Tibial artery (tissue), 4 donors: ENCODE measurements at regions of chr7 and their contacts with region 1.

Region 1: GRCh38 chr7:117085769-117086463 is 132.6 kb downstream of the ST7 start:
- DNase-seq: no peak
- H3K4me3 ChIP-seq: no peak overlapping the region
- H3K27ac ChIP-seq: no peak overlapping the region
- H3K4me1 ChIP-seq: peaks cover 0 to 74% (median 2%) of the 10 kb centered on the region in 4 donors
- H3K27me3 ChIP-seq: no peaks in the 10 kb centered on the region
- CTCF ChIP-seq: no peak

Region 2: DNA sequence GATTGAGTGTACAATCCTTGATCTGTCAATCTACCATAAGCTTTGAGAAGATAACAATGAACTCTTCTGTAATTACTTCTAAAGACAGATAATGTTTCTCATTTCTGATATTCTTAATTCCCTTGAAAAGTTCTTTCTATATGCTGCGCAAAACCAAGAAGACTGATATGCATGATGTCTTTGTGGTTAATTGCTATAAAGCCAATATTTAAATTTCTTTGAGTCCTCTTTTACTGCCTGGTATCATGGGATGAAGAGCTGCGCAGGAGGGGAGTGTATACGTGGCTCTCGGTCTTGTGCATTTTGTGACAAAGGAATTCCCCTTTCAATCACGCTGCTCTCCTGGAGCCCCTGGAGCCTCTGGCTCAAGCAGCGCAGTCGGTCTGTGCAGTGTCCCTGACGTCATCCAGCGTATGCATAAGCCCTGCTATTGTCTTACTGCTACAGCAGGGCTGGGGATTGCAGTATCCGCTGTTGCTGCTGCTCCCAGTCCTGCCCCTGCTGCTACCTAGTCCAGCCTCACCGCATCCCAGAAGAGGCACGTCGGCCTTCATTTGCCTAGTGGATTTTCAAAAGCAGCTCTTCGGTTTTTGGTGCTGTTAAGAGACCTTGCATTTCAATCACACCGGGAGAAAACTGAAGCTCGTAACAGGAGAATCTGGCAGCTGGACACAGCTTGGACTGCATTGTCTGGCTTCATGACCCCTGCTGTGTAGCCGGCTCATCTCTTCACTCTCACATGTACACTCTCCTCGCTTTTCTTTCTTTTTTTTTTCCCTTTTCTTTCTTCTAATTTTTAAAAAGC is 65.9 kb before region 1 on chr7:
- intact Hi-C with region 1: loop called (anchors 10 kb)
- DNase-seq: peak; percentile 50 to 73
- H3K4me3 ChIP-seq: peak overlapping the region; percentile 50 to 54
- H3K27ac ChIP-seq: peak overlapping the region; percentile 77 to 83
- H3K4me1 ChIP-seq: peaks cover 0 to 75% (median 16%) of the 10 kb centered on the region in 4 donors
- H3K27me3 ChIP-seq: no peaks in the 10 kb centered on the region
- CTCF ChIP-seq: no peak

Region 3: DNA sequence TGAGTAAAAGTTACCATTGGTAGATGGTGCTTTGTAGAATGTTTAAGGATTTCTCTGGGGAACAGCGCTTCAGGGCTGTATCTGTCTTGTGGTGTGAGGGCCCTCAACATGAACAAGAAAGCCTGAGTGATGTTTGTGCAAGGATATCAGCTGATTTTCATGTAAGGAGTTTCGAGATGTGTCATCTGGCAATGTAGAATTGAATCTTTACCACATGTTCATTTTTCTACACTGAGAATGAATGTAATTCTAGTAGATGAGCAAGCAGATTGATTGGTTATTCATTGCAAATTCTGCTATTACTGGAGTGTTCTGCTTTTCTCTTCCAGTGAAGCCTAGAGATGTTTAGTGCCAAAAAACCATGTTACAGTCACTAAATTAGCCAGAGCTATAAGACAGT is 44.9 kb before region 1 on chr7:
- intact Hi-C with region 1: no loop called
- DNase-seq: no peak
- H3K4me3 ChIP-seq: no peak overlapping the region
- H3K27ac ChIP-seq: peak overlapping the region in 1 of 2 donors; percentile 54
- H3K4me1 ChIP-seq: peaks cover 0 to 99% (median 16%) of the 10 kb centered on the region in 4 donors
- H3K27me3 ChIP-seq: no peaks in the 10 kb centered on the region
- CTCF ChIP-seq: no peak